ENCODE measurements at regions of chr17 and their contacts with region 1.

Region 1: DNA sequence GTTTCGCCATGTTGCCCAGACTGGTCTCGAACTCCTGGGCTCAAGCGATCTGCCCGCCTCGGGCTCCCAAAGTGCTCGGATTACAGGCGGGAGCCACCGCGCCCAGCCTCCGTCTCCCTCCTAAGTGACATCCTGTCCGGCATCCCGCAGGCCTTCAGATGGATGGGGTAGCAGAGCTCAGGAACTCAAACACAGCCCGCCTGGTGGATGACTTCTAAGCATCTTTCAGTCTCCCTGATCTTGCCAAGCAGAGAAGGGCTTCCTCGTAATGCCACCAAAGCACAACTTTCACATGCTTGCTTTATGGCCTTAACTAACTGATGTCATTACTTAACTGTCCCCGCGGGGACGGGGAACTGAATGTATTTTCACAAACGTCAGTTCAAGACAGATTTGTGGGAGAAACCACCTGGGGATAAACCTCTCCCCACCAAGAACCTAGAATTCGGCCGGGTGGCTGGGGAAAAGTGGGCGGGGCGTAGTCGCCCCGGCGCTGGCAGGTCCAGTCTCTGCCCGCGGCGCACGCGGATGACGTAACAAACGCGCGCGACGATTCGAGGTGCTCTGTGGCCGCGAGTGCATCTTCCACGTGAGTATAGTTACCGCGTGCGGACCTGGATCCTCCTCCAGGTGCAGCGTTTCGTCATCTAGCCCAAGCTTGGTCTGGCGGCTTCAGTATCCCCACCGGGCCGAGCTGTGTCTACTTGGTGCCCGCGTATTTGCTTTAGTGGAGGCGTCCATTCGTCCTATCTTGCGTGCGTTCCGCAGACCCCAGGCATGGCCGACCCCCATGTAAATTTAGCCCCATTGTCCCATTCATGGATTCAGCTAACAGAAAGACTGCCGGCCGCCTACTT is at the start of gene PFAS:
- DNase-seq: peak; percentile 97
- H3K4me3 ChIP-seq: peak within 1 kb of the TSS; percentile 60 to 66 (median 62)
- H3K27ac ChIP-seq: peak within 1 kb of the TSS; percentile 95 to 98 (median 98)
- H3K4me1 ChIP-seq: peaks cover 0 to 34% (median 17%) of the 10 kb centered on the region in 4 donors
- H3K27me3 ChIP-seq: no peaks in the 10 kb centered on the region
- CTCF ChIP-seq: no peak
- EP300 ChIP-seq: peak in 2 of 4 donors; percentile 7
- POLR2A ChIP-seq: peak in 1 of 2 donors; percentile 14
- total RNA-seq, gene PFAS: 4.6 to 10.2 (median 6.9) TPM

Region 2: GRCh38 chr17:8189711-8190477 is 59.1 kb before region 1 on chr17 and contains the start of gene BORCS6:
- intact Hi-C with region 1: loop called (anchors 1 kb)
- DNase-seq: peak; percentile 100
- H3K4me3 ChIP-seq: peak within 1 kb of the TSS; percentile 54 to 78 (median 68)
- H3K27ac ChIP-seq: peak within 1 kb of the TSS; percentile 81 to 99 (median 96)
- H3K4me1 ChIP-seq: peaks cover 0 to 53% (median 41%) of the 10 kb centered on the region in 4 donors
- H3K27me3 ChIP-seq: no peaks in the 10 kb centered on the region
- CTCF ChIP-seq: no peak
- EP300 ChIP-seq: peak in 1 of 4 donors; percentile 26
- POLR2A ChIP-seq: peak; percentile 78 to 84
- total RNA-seq, gene BORCS6: 7.7 to 17.7 (median 15.8) TPM

Region 3: DNA sequence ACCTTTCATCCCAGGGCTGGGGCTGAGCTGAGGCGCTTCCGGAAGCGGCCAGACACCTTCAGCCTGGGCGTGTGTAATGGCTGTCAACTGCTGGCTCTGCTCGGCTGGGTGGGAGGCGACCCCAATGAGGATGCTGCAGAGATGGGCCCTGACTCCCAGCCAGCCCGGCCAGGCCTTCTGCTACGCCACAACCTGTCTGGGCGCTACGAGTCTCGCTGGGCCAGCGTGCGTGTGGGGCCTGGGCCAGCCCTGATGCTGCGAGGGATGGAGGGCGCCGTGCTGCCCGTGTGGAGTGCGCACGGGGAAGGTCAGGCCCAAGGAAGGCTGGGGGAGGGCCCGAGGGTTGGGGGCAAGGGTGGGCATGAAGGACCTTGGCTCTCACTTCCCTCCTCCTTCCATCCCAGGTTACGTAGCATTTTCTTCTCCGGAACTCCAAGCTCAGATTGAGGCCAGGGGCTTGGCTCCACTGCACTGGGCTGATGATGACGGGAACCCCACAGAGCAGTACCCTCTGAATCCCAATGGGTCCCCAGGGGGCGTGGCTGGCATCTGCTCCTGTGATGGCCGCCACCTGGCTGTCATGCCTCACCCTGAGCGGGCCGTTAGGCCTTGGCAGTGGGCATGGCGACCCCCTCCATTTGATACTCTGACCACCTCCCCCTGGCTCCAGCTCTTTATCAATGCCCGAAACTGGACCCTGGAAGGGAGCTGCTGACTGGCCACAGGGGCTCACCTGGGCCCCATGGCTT is 19.7 kb after region 1 on chr17:
- intact Hi-C with region 1: no loop called
- DNase-seq: no peak
- H3K4me3 ChIP-seq: no peak overlapping the region
- H3K27ac ChIP-seq: no peak overlapping the region
- H3K4me1 ChIP-seq: no peaks in the 10 kb centered on the region
- H3K27me3 ChIP-seq: no peaks in the 10 kb centered on the region
- CTCF ChIP-seq: no peak
- EP300 ChIP-seq: no peak
- POLR2A ChIP-seq: no peak

Region 4: GRCh38 chr17:8288336-8289102 is 39.5 kb after region 1 on chr17 and contains the start of gene RANGRF:
- intact Hi-C with region 1: loop called (anchors 1 kb)
- DNase-seq: peak; percentile 96
- H3K4me3 ChIP-seq: peak within 1 kb of the TSS; percentile 72 to 84 (median 78)
- H3K27ac ChIP-seq: peak within 1 kb of the TSS; percentile 92 to 97 (median 95)
- H3K4me1 ChIP-seq: peaks cover 0 to 18% (median 15%) of the 10 kb centered on the region in 4 donors
- H3K27me3 ChIP-seq: no peaks in the 10 kb centered on the region
- CTCF ChIP-seq: no peak
- EP300 ChIP-seq: no peak
- POLR2A ChIP-seq: peak; percentile 55
- total RNA-seq, gene RANGRF: 27.1 to 46.6 (median 30.8) TPM

Region 5: DNA sequence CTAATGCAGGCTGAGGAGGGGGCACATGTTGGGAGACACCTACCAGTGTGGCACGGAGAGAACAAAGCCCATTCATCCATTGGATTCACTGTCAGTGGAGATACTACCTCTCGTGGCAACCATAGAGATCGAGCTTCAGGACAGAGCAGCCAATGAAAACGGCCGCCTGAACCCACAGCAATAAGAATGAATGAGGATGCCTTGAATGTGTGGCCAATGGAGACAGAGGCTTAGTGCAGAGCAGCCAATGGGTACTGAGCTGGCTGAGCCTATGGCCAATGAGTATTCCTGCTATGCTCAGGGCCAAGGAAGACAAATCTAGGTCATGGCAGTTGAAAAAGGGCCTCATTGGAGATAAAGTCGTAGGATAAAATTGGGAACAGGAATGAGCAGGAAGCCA is 72.0 kb after region 1 on chr17:
- intact Hi-C with region 1: no loop called
- DNase-seq: no peak
- H3K4me3 ChIP-seq: no peak overlapping the region
- H3K27ac ChIP-seq: no peak overlapping the region
- H3K4me1 ChIP-seq: no peaks in the 10 kb centered on the region
- H3K27me3 ChIP-seq: peaks cover 0 to 41% (median 24%) of the 10 kb centered on the region in 3 donors
- CTCF ChIP-seq: no peak
- EP300 ChIP-seq: no peak
- POLR2A ChIP-seq: no peak

Region 6: DNA sequence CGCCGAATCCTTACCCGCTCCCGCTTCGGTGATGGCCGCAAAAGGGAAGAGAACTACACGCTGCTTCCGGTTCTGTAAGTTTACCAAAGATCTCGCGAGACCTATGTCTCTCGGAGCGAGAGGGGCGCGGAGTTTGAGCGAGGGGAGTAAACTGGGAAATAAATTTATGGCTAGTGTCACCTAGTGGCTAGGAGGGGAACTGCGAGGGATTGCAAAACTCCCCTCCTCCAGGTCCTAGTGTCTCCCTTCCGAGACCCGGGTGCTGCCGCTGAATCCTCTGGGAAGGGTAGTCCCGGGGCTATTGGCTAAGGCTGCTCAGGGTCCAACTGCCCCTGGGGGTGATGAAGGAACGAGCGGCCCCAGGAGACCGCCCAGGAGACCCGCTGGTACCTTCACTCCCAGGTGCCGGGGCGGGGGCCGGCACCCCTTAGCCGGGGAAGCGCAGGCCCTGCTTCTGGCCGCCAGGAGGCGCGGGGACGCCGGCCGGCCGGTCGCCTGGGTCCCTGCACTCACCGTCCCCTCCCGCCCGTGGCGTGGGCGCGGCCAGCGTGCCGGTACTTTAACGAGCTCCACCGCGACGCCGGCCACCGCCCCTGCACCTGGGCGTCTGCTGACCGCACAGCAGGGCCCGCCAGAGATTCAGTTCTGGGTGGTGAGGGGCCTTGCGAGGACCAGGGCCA is 134.3 kb after region 1 on chr17 and contains the start of gene RPL26:
- intact Hi-C with region 1: loop called (anchors 5 kb)
- DNase-seq: peak; percentile 99
- H3K4me3 ChIP-seq: peak within 1 kb of the TSS; percentile 64 to 84 (median 72)
- H3K27ac ChIP-seq: peak within 1 kb of the TSS; percentile 87 to 94 (median 92)
- H3K4me1 ChIP-seq: peaks cover 0 to 46% (median 34%) of the 10 kb centered on the region in 4 donors
- H3K27me3 ChIP-seq: no peaks in the 10 kb centered on the region
- CTCF ChIP-seq: peak; percentile 97 to 100 (median 98)
- EP300 ChIP-seq: no peak
- POLR2A ChIP-seq: no peak
- total RNA-seq, gene RPL26: 3,681 to 6,264 (median 5,219) TPM